T-cell (primary cell): ENCODE measurements at regions of chr1 and their contacts with region 1.

Region 1: GRCh38 chr1:114270282-114270681 is 116.6 kb upstream of the SYT6 start:
- DNase-seq: no peak
- ATAC-seq: no peak
- H3K4me3 ChIP-seq: no peak overlapping the region
- H3K4me3 Mint-ChIP-seq: no peak overlapping the region
- H3K27ac ChIP-seq: no peak overlapping the region
- H3K27ac Mint-ChIP-seq: no peak overlapping the region
- H3K4me1 ChIP-seq: no peaks in the 10 kb centered on the region
- H3K4me1 Mint-ChIP-seq: peaks cover 0 to 5% (median 4%) of the 10 kb centered on the region in 3 donors
- H3K27me3 ChIP-seq: peaks cover 0 to 2% of the 10 kb centered on the region in 2 experiments
- H3K27me3 Mint-ChIP-seq: peaks cover 7 to 16% of the 10 kb centered on the region in 2 donors

Region 2: DNA sequence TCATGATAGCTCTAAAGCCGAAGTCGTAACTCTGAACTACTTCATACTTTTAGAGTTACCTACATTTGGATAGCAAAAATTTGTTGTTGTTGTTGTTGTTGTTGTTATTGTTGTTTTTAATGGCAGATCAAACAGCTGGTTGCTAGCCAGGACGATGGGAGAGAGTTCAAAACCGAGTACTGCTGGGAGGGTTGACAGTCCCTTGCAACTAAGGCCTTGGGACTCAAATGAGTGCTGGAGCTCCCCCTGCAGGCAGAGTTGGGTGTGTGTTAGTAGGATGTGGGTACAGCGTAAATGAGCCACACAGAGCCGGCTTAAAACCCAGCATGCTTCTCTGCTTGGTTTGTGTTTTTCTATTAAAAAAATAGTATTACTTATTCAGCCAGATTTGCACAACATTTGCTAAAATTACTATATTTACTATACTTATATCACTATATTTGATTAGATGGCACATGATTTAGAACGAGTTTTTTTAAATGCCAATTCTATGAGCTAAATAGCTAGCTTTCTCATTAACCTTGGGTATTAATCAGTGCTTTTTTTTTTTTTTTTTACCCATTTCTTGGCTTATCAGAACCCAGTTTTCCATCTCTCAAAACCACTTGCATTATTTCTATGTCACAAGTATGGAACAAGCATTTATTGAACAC is 12.6 kb after region 1 on chr1:
- CTCF ChIA-PET with region 1: interaction called, 7 to 12 read pairs
- POLR2A ChIA-PET with region 1: no interaction called
- DNase-seq: peak; percentile 62 to 92 (median 80)
- ATAC-seq: peak; percentile 92 to 99 (median 98)
- H3K4me3 ChIP-seq: no peak overlapping the region
- H3K4me3 Mint-ChIP-seq: no peak overlapping the region
- H3K27ac ChIP-seq: no peak overlapping the region
- H3K27ac Mint-ChIP-seq: no peak overlapping the region
- H3K4me1 ChIP-seq: no peaks in the 10 kb centered on the region
- H3K4me1 Mint-ChIP-seq: peaks cover 0 to 4% (median 3%) of the 10 kb centered on the region in 3 donors
- H3K27me3 ChIP-seq: no peaks in the 10 kb centered on the region
- H3K27me3 Mint-ChIP-seq: no peaks in the 10 kb centered on the region